ENCODE measurements at regions of chr19 and their contacts with region 1.

Region 1: GRCh38 chr19:7376151-7376852 is 27.6 kb downstream of the ARHGEF18 start:
- DNase-seq: no peak
- H3K4me3 Mint-ChIP-seq: no peak overlapping the region
- H3K27ac Mint-ChIP-seq: no peak overlapping the region
- H3K4me1 Mint-ChIP-seq: peaks cover 6% of the 10 kb centered on the region
- H3K27me3 Mint-ChIP-seq: no peaks in the 10 kb centered on the region

Region 2: GRCh38 chr19:7326105-7326877 is 50.0 kb before region 1 on chr19:
- CTCF ChIA-PET with region 1: no interaction called
- POLR2A ChIA-PET with region 1: no interaction called
- intact Hi-C with region 1: no loop called
- DNase-seq: peak; percentile 63
- H3K4me3 Mint-ChIP-seq: no peak overlapping the region
- H3K27ac Mint-ChIP-seq: no peak overlapping the region
- H3K4me1 Mint-ChIP-seq: no peaks in the 10 kb centered on the region
- H3K27me3 Mint-ChIP-seq: peaks cover under 1% of the 10 kb centered on the region

Region 3: DNA sequence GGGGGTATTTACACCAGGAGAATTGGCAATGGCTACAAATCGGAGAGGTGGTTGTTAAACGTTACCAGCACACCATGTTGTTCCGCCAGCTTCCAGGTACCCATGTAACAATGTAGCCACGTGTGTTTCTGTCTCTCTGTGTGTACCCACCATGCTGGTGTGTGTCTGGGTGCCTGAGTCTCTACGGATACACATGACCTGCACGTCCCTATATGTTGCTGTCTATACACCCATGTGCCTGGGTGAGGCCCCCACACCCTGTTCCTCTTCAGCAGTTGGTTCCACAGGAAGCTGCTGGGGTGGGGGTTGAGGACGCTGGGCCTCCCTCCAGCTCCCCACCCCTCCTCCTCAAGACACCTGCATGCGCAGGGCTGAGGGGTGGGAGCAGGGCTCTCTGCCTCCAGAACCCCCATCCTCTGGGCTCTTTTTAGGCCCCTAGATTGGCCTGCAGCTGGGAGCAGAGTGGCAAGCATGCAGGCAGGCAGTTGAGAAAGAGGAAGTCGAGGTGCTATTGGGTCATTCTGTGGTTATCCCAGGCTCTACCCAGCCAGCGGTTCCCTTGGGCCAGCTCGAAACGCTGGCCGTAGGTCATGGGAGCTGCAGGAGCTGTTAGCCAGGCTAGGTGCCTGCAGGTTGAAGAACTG is 27.6 kb before region 1 on chr19 and contains the start of gene ARHGEF18:
- CTCF ChIA-PET with region 1: interaction called, 41 read pairs
- POLR2A ChIA-PET with region 1: no interaction called
- intact Hi-C with region 1: no loop called
- DNase-seq: peak; percentile 66
- H3K4me3 Mint-ChIP-seq: peak within 1 kb of the TSS; percentile 79
- H3K27ac Mint-ChIP-seq: peak within 1 kb of the TSS; percentile 94
- H3K4me1 Mint-ChIP-seq: peaks cover 53% of the 10 kb centered on the region
- H3K27me3 Mint-ChIP-seq: no peaks in the 10 kb centered on the region
- total RNA-seq, gene ARHGEF18: 36.9 to 37.1 TPM